ENCODE measurements at regions of chr14 and their contacts with region 1.

Region 1: GRCh38 chr14:73058224-73058921 is at the start of gene RBM25:
- DNase-seq: peak; percentile 89 to 98 (median 92)
- ATAC-seq: peak; percentile 93
- H3K4me3 ChIP-seq: peak within 1 kb of the TSS; percentile 91
- H3K4me3 Mint-ChIP-seq: no peak within 1 kb of the TSS
- H3K27ac ChIP-seq: peak within 1 kb of the TSS; percentile 78 to 93
- H3K27ac Mint-ChIP-seq: no peak within 1 kb of the TSS
- H3K4me1 ChIP-seq: peaks cover 38% of the 10 kb centered on the region
- H3K4me1 Mint-ChIP-seq: peaks cover 36% of the 10 kb centered on the region
- H3K27me3 ChIP-seq: peaks cover 0 to 2% of the 10 kb centered on the region in 2 experiments
- H3K27me3 Mint-ChIP-seq: no peaks in the 10 kb centered on the region
- CTCF ChIP-seq: no peak
- total RNA-seq, gene RBM25: 157 to 161 TPM

Region 2: DNA sequence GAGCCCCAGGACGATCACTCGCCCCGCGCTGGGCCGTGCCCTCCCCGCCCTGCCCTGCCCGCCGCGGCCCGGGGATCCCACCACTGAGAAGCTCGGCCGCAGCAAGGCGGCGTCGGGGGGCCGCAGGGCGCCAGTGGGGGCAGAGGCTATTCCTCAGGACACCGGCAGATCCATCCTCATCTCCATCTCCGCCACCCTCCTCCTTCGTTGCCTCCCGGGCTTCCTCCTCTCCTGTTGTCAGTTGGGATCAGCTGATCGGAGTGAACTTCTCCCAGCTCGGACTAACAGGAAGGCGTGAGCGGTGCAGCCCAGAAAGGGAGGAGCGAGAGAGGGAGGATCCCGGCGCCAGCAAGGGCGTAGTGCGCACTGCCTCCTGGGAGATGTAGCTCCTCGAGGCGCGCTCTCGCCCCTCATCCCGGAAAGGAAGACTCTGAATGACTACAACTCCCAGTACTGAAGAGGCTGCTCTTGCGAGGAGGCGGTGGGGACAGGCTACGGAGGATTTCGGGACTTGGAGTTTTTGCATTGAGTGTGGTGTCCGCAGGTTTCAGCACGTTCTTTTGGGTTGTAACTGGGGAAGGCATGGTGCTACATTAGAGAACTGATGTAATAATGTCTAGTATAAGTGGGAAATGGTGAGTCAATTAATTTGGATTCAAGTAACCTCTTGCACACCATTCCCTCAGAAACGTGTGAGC is 31.4 kb before region 1 on chr14 and contains the start of gene ZFYVE1:
- CTCF ChIA-PET with region 1: interaction called, 7 read pairs
- POLR2A ChIA-PET with region 1: interaction called, 111 read pairs
- intact Hi-C with region 1: loop called (anchors 1 kb)
- DNase-seq: peak; percentile 76 to 96 (median 86)
- ATAC-seq: peak; percentile 99
- H3K4me3 ChIP-seq: peak within 1 kb of the TSS; percentile 64
- H3K4me3 Mint-ChIP-seq: peak within 1 kb of the TSS; percentile 97
- H3K27ac ChIP-seq: no peak within 1 kb of the TSS
- H3K27ac Mint-ChIP-seq: peak within 1 kb of the TSS; percentile 79
- H3K4me1 ChIP-seq: peaks cover 18% of the 10 kb centered on the region
- H3K4me1 Mint-ChIP-seq: peaks cover 47% of the 10 kb centered on the region
- H3K27me3 ChIP-seq: no peaks in the 10 kb centered on the region
- H3K27me3 Mint-ChIP-seq: no peaks in the 10 kb centered on the region
- CTCF ChIP-seq: no peak
- total RNA-seq, gene ZFYVE1: 9.3 to 10.9 TPM

Region 3: GRCh38 chr14:73069585-73069984 is 11.2 kb after region 1 on chr14:
- CTCF ChIA-PET with region 1: no interaction called
- POLR2A ChIA-PET with region 1: interaction called, 14 read pairs
- intact Hi-C with region 1: no loop called
- DNase-seq: no peak
- ATAC-seq: no peak
- H3K4me3 ChIP-seq: no peak overlapping the region
- H3K4me3 Mint-ChIP-seq: no peak overlapping the region
- H3K27ac ChIP-seq: no peak overlapping the region
- H3K27ac Mint-ChIP-seq: no peak overlapping the region
- H3K4me1 ChIP-seq: peaks cover 28% of the 10 kb centered on the region
- H3K4me1 Mint-ChIP-seq: peaks cover 44% of the 10 kb centered on the region
- H3K27me3 ChIP-seq: no peaks in the 10 kb centered on the region
- H3K27me3 Mint-ChIP-seq: no peaks in the 10 kb centered on the region
- CTCF ChIP-seq: no peak

Region 4: DNA sequence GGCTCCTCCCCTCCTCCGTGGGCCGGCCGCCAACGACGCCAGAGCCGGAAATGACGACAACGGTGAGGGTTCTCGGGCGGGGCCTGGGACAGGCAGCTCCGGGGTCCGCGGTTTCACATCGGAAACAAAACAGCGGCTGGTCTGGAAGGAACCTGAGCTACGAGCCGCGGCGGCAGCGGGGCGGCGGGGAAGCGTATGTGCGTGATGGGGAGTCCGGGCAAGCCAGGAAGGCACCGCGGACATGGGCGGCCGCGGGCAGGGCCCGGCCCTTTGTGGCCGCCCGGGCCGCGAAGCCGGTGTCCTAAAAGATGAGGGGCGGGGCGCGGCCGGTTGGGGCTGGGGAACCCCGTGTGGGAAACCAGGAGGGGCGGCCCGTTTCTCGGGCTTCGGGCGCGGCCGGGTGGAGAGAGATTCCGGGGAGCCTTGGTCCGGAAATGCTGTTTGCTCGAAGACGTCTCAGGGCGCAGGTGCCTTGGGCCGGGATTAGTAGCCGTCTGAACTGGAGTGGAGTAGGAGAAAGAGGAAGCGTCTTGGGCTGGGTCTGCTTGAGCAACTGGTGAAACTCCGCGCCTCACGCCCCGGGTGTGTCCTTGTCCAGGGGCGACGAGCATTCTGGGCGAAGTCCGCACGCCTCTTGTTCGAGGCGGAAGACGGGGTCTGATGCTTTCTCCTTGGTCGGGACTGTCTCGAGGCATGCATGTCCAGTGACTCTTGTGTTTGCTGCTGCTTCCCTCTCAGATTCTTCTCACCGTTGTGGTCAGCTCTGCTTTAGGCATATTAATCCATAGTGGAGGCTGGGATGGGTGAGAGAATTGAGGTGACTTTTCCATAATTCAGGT is 78.2 kb after region 1 on chr14 and contains the start of gene PSEN1:
- CTCF ChIA-PET with region 1: no interaction called
- POLR2A ChIA-PET with region 1: interaction called, 84 read pairs
- intact Hi-C with region 1: loop called (anchors 1 to 2 kb)
- DNase-seq: peak; percentile 97 to 99 (median 99)
- ATAC-seq: peak; percentile 93
- H3K4me3 ChIP-seq: peak within 1 kb of the TSS; percentile 98
- H3K4me3 Mint-ChIP-seq: peak within 1 kb of the TSS; percentile 98
- H3K27ac ChIP-seq: peak within 1 kb of the TSS; percentile 92
- H3K27ac Mint-ChIP-seq: peak within 1 kb of the TSS; percentile 99
- H3K4me1 ChIP-seq: peaks cover 23% of the 10 kb centered on the region
- H3K4me1 Mint-ChIP-seq: peaks cover 31% of the 10 kb centered on the region
- H3K27me3 ChIP-seq: no peaks in the 10 kb centered on the region
- H3K27me3 Mint-ChIP-seq: no peaks in the 10 kb centered on the region
- CTCF ChIP-seq: no peak
- total RNA-seq, gene PSEN1: 27.1 to 28.3 TPM

Region 5: GRCh38 chr14:73458151-73458976 is 400.0 kb after region 1 on chr14 and contains the start of gene NUMB:
- CTCF ChIA-PET with region 1: no interaction called
- POLR2A ChIA-PET with region 1: interaction called, 18 read pairs
- intact Hi-C with region 1: loop called in 1 of 2 experiments (anchors 5 kb)
- DNase-seq: peak; percentile 88 to 100 (median 94)
- ATAC-seq: peak; percentile 96
- H3K4me3 ChIP-seq: peak within 1 kb of the TSS; percentile 98
- H3K4me3 Mint-ChIP-seq: peak within 1 kb of the TSS; percentile 97
- H3K27ac ChIP-seq: peak within 1 kb of the TSS; percentile 23 to 37
- H3K27ac Mint-ChIP-seq: peak within 1 kb of the TSS; percentile 84
- H3K4me1 ChIP-seq: peaks cover 21% of the 10 kb centered on the region
- H3K4me1 Mint-ChIP-seq: peaks cover 45% of the 10 kb centered on the region
- H3K27me3 ChIP-seq: no peaks in the 10 kb centered on the region
- H3K27me3 Mint-ChIP-seq: no peaks in the 10 kb centered on the region
- CTCF ChIP-seq: no peak
- total RNA-seq, gene NUMB: 27.9 to 31.5 TPM

Region 6: DNA sequence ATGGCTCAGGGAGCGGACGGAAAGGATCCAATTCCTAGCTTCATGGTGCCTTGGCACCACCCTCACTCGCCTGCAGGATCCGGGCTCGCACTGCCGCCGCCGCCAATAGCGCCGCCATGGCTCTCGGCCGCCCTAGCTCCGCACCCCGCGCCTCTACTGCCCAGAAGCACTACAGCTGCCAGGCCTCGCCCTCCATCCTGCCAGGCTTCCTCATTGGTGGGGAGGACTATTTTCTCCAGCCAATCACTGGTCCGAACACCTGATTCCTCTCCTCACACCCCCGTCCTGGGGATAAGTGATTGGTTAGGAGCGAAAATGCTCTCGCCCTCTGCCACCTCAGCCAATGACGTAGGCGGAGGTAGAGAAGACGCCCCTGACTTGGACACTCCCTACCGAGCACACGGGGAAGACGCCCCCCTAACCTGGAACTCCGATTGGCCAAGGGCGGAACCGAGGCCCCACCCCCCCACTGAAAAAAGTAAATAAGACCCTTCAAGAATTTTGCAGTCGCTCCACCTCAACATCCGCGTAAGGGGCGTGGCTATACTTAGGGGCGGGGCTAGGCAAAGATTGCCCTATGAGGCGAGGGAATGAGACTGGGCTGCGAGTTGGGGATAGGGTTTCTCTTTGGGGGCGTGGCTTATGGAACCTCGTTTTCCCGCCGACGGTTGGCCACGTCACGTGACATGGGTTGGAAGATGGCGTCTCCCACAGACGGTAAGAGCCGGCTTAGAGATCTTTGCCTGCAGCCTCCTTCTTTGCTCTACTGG is 1026.1 kb after region 1 on chr14 and contains the starts of genes ALDH6A1 and LIN52:
- CTCF ChIA-PET with region 1: no interaction called
- POLR2A ChIA-PET with region 1: no interaction called
- intact Hi-C with region 1: loop called in 1 of 2 experiments (anchors 10 kb)
- DNase-seq: peak; percentile 98 to 100 (median 100)
- ATAC-seq: peak; percentile 86
- H3K4me3 ChIP-seq: peak within 1 kb of the TSS; percentile 95
- H3K4me3 Mint-ChIP-seq: peak within 1 kb of the TSS; percentile 94
- H3K27ac ChIP-seq: peak within 1 kb of the TSS; percentile 52 to 72
- H3K27ac Mint-ChIP-seq: peak within 1 kb of the TSS; percentile 86
- H3K4me1 ChIP-seq: peaks cover 21% of the 10 kb centered on the region
- H3K4me1 Mint-ChIP-seq: peaks cover 36% of the 10 kb centered on the region
- H3K27me3 ChIP-seq: no peaks in the 10 kb centered on the region
- H3K27me3 Mint-ChIP-seq: no peaks in the 10 kb centered on the region
- CTCF ChIP-seq: no peak
- total RNA-seq, gene ALDH6A1: 5.3 to 6.2 TPM
- total RNA-seq, gene LIN52: 5.4 to 6.8 TPM